ENCODE measurements at regions of chr18 and their contacts with region 1.

Region 1: GRCh38 chr18:31546476-31546875 is 45.2 kb upstream of the TTR start:
- DNase-seq: no peak
- ATAC-seq: no peak
- H3K4me3 ChIP-seq: no peak overlapping the region
- H3K27ac ChIP-seq: no peak overlapping the region
- H3K4me1 ChIP-seq: no peaks in the 10 kb centered on the region
- H3K27me3 ChIP-seq: no peaks in the 10 kb centered on the region
- CTCF ChIP-seq: no peak
- POLR2A ChIP-seq: no peak

Region 2: GRCh38 chr18:31677592-31677991 is 131.1 kb after region 1 on chr18:
- in situ Hi-C with region 1: no loop called
- intact Hi-C with region 1: no loop called
- DNase-seq: no peak
- ATAC-seq: no peak
- H3K4me3 ChIP-seq: no peak overlapping the region
- H3K27ac ChIP-seq: peak overlapping the region in 1 of 4 donors; percentile 52
- H3K4me1 ChIP-seq: peaks cover 7 to 18% of the 10 kb centered on the region in 2 donors
- H3K27me3 ChIP-seq: no peaks in the 10 kb centered on the region
- CTCF ChIP-seq: no peak
- POLR2A ChIP-seq: no peak

Region 3: DNA sequence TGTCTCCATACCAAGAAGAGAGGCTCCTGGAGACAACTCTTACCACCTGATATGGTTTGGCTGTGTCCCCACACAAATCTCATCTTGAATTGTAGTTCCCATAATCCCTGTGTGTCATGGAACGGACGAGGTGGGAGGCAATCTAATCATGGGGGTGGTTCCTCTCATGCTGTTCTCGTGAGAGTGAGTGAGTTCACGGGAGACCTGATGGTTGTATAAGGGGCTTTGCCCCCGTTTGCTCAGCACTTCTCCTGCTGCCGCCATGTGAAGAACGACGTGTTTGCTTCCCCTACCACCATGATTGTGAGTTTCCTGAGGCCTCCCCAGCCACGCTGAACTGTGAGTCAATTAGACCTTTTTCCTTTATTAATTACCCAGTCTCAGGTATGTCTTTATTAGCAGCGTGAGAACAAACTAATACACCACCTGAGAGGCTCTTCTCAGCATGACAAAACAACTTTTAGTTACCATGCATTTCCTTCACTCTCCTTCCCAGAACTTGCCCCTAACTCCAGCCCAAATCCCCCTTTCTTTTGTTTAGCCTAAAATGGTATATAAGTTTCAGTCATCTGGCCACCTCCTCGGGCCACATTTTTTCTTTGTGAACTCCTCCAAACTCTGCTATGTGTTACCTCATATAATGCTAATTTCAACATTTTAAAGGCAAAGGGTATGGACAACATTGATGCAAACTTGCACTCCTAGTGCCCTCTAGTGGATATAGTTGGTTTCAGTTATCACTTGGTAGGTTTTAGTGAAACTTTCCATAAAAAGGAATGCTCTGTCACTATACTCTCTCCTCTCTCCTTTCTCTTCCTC is 272.8 kb after region 1 on chr18:
- in situ Hi-C with region 1: loop called (anchors 10 to 25 kb)
- intact Hi-C with region 1: no loop called
- DNase-seq: no peak
- ATAC-seq: peak in 1 of 2 donors; percentile 58
- H3K4me3 ChIP-seq: no peak overlapping the region
- H3K27ac ChIP-seq: no peak overlapping the region
- H3K4me1 ChIP-seq: no peaks in the 10 kb centered on the region
- H3K27me3 ChIP-seq: no peaks in the 10 kb centered on the region
- CTCF ChIP-seq: peak in 4 of 5 experiments; percentile 24 to 62 (median 53)
- POLR2A ChIP-seq: no peak